Gastrocnemius medialis (tissue), 4 donors: ENCODE measurements at regions of chr4 and their contacts with region 1.

Region 1: GRCh38 chr4:8241895-8242696 is 27.5 kb upstream of the HTRA3 start:
- DNase-seq: peak; percentile 71 to 89
- ATAC-seq: peak; percentile 88 to 91
- H3K4me3 ChIP-seq: no peak overlapping the region
- H3K27ac ChIP-seq: peak overlapping the region; percentile 11 to 42 (median 35)
- H3K4me1 ChIP-seq: peaks cover 8 to 15% of the 10 kb centered on the region in 2 donors
- H3K27me3 ChIP-seq: no peaks in the 10 kb centered on the region
- CTCF ChIP-seq: peak; percentile 88 to 100 (median 98)
- POLR2A ChIP-seq: no peak

Region 2: GRCh38 chr4:7392438-7393421 is 849.4 kb before region 1 on chr4:
- in situ Hi-C with region 1: no loop called
- intact Hi-C with region 1: no loop called
- DNase-seq: no peak
- ATAC-seq: no peak
- H3K4me3 ChIP-seq: no peak overlapping the region
- H3K27ac ChIP-seq: no peak overlapping the region
- H3K4me1 ChIP-seq: no peaks in the 10 kb centered on the region
- H3K27me3 ChIP-seq: peaks cover 11 to 17% (median 17%) of the 10 kb centered on the region in 3 donors
- CTCF ChIP-seq: no peak
- POLR2A ChIP-seq: no peak

Region 3: GRCh38 chr4:8141935-8142334 is 100.2 kb before region 1 on chr4:
- in situ Hi-C with region 1: no loop called
- intact Hi-C with region 1: no loop called
- DNase-seq: peak in 1 of 2 donors; percentile 79
- ATAC-seq: peak in 1 of 2 donors; percentile 32
- H3K4me3 ChIP-seq: no peak overlapping the region
- H3K27ac ChIP-seq: peak overlapping the region; percentile 94 to 99 (median 96)
- H3K4me1 ChIP-seq: peaks cover 49 to 52% of the 10 kb centered on the region in 2 donors
- H3K27me3 ChIP-seq: no peaks in the 10 kb centered on the region
- CTCF ChIP-seq: no peak
- POLR2A ChIP-seq: peak; percentile 29 to 49

Region 4: GRCh38 chr4:8176547-8177399 is 65.3 kb before region 1 on chr4:
- in situ Hi-C with region 1: no loop called
- intact Hi-C with region 1: loop called (anchors 5 kb)
- DNase-seq: peak in 1 of 2 donors; percentile 49
- ATAC-seq: peak; percentile 64 to 80
- H3K4me3 ChIP-seq: no peak overlapping the region
- H3K27ac ChIP-seq: no peak overlapping the region
- H3K4me1 ChIP-seq: peaks cover under 1 to 3% of the 10 kb centered on the region in 2 donors
- H3K27me3 ChIP-seq: no peaks in the 10 kb centered on the region
- CTCF ChIP-seq: peak; percentile 74 to 82 (median 78)
- POLR2A ChIP-seq: no peak

Region 5: DNA sequence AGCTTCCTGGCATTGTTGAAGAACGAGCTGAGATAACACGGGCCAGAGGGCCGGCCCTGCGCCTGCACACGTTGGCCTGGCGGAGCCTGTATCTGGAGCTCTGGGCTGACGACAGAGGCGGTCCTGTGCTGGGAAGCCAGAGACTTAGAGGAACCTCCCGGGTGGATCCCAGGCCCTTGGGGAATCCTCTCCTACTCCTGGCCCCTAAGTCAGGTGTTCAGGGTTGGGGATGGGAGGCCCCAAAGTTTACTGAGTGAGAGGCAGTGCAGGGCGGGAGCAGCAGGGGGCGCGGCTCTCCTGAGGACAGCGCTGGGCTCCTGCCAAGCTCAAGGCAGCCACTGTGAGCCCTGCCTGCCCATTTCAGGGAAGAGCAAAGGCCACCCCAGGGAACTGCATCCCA is 25.0 kb after region 1 on chr4:
- in situ Hi-C with region 1: no loop called
- intact Hi-C with region 1: loop called (anchors 2 kb)
- DNase-seq: peak in 1 of 2 donors; percentile 60
- ATAC-seq: peak; percentile 40 to 41
- H3K4me3 ChIP-seq: no peak overlapping the region
- H3K27ac ChIP-seq: no peak overlapping the region
- H3K4me1 ChIP-seq: no peaks in the 10 kb centered on the region
- H3K27me3 ChIP-seq: no peaks in the 10 kb centered on the region
- CTCF ChIP-seq: peak in 4 of 5 experiments; percentile 33 to 65 (median 58)
- POLR2A ChIP-seq: no peak

Region 6: GRCh38 chr4:8308856-8309771 is 67.0 kb after region 1 on chr4:
- in situ Hi-C with region 1: no loop called
- intact Hi-C with region 1: loop called (anchors 2 kb)
- DNase-seq: peak; percentile 73 to 87
- ATAC-seq: peak; percentile 77 to 84
- H3K4me3 ChIP-seq: peak overlapping the region; percentile 3 to 40 (median 26)
- H3K27ac ChIP-seq: peak overlapping the region; percentile 65 to 72 (median 70)
- H3K4me1 ChIP-seq: peaks cover 17 to 35% of the 10 kb centered on the region in 2 donors
- H3K27me3 ChIP-seq: no peaks in the 10 kb centered on the region
- CTCF ChIP-seq: peak; percentile 33 to 77 (median 56)
- POLR2A ChIP-seq: peak; percentile 26 to 31

Region 7: DNA sequence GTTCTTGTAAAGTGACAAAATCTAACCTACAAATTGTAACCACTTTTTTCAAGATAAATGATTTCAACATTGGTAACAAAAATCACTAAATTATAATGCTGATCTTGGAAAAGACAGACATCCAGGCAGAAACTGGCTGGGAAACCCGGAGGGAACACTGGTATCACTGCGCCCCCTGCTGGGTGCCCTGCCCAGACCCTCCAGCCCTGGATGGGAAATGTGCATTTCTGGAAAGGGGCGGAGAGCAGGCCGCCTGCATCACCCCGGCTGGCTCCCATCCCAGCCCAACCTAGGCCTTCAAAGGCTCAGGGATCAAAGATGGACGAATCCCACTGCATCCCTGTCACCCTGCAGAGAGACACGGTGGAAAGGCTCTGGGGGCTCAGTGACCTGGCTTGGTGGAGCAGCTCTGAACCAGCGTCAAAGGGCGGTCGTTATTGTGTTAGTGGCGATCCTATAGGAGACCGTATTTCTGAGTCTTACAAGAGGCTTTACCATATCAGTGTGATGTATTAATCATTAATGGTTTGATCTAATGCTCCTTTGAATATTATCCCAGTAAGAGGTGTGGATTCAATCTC is 161.2 kb after region 1 on chr4:
- in situ Hi-C with region 1: loop called (anchors 5 kb)
- intact Hi-C with region 1: loop called (anchors 1 kb)
- DNase-seq: peak; percentile 59 to 72
- ATAC-seq: peak; percentile 82 to 86
- H3K4me3 ChIP-seq: no peak overlapping the region
- H3K27ac ChIP-seq: peak overlapping the region; percentile 7 to 62 (median 47)
- H3K4me1 ChIP-seq: peaks cover 11 to 15% of the 10 kb centered on the region in 2 donors
- H3K27me3 ChIP-seq: no peaks in the 10 kb centered on the region
- CTCF ChIP-seq: peak; percentile 90 to 95 (median 93)
- POLR2A ChIP-seq: no peak

Region 8: DNA sequence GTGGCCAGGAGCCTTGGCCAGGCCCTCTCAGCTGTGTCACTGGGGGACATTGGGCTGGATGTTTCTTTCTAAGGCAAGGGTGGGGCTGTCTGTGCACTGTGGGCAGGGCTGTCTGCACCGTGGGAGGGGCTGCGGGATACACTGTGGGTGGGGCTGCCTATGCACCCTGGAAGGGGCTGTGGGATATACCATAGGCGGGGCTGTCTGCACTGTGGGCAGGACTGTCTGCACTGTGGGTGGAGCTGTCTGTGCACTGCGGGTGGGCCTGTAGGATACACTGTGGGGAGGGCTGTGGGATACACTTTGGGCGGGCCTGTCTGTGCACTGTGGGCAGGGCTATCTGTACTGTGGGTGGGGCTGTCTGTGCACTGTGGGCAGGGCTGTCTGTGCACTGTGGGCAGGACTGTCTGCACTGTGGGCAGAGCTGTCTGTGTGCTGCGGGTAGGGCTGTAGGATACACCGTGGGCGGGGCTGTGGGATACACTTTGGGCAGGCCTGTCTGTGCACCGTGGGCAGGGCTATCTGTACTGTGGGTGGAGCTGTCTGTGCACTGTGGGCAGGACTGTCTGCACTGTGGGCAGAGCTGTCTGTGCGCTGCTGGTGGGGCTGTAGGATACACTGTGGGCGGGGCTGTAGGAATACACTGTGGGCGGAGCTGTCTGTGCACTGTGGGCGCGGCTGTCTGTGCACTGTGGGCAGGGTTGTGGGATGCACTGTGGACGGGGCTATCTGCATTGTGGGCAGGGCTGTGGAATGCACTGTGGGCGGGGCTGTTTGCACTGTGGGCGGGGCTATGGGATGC is 167.4 kb after region 1 on chr4:
- in situ Hi-C with region 1: loop called (anchors 5 kb)
- intact Hi-C with region 1: no loop called
- DNase-seq: no peak
- ATAC-seq: peak in 1 of 2 donors; percentile 34
- H3K4me3 ChIP-seq: no peak overlapping the region
- H3K27ac ChIP-seq: no peak overlapping the region
- H3K4me1 ChIP-seq: no peaks in the 10 kb centered on the region
- H3K27me3 ChIP-seq: no peaks in the 10 kb centered on the region
- CTCF ChIP-seq: no peak
- POLR2A ChIP-seq: no peak

Region 9: GRCh38 chr4:8594097-8595038 is 352.3 kb after region 1 on chr4:
- in situ Hi-C with region 1: no loop called
- intact Hi-C with region 1: loop called (anchors 5 kb)
- DNase-seq: peak in 1 of 2 donors; percentile 22
- ATAC-seq: peak; percentile 52 to 70
- H3K4me3 ChIP-seq: no peak overlapping the region
- H3K27ac ChIP-seq: no peak overlapping the region
- H3K4me1 ChIP-seq: no peaks in the 10 kb centered on the region
- H3K27me3 ChIP-seq: peaks cover 33 to 40% (median 36%) of the 10 kb centered on the region in 3 donors
- CTCF ChIP-seq: peak in 3 of 5 experiments; percentile 40 to 53 (median 48)
- POLR2A ChIP-seq: no peak